GM13977 (cell line): ENCODE measurements at regions of chr13 and their contacts with region 1.

Region 1: GRCh38 chr13:73835138-73835721 is 299.0 kb downstream of the KLF12 start:
- DNase-seq: peak; percentile 31
- CTCF ChIP-seq: peak; percentile 53

Region 2: DNA sequence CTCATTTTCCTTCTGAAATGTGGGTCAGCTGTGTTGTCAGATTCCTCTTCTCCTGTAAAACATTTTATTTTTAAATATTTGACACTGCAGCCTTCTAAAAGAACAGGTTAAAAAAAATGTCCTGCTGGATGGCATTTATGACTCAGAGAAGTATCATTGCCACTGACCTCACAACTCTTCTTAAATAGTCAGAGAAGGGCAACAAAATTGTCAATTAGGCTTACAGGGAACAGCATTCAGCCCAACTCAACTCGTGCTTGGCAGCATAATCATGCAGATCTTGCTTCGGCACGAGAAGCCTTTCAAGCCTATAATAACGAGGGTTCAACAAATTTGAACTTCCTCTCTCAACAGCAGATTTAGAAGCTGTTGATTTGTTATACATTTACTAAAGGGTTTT is 1671.6 kb before region 1 on chr13:
- in situ Hi-C with region 1: no loop called
- DNase-seq: no peak
- CTCF ChIP-seq: no peak

Region 3: GRCh38 chr13:74287724-74288169 is 452.5 kb after region 1 on chr13:
- in situ Hi-C with region 1: loop called (anchors 25 kb)
- DNase-seq: peak; percentile 8
- CTCF ChIP-seq: no peak

Region 4: GRCh38 chr13:74662905-74663304 is 827.7 kb after region 1 on chr13:
- in situ Hi-C with region 1: no loop called
- DNase-seq: no peak
- CTCF ChIP-seq: no peak